H1 (cell line): ENCODE measurements at regions of chr22 and their contacts with region 1.

Region 1: GRCh38 chr22:22201185-22201929 is 43.2 kb upstream of the VPREB1 start:
- DNase-seq: peak; percentile 19 to 87
- H3K4me3 ChIP-seq: no peak overlapping the region
- H3K27ac ChIP-seq: no peak overlapping the region
- H3K4me1 ChIP-seq: no peaks in the 10 kb centered on the region
- H3K27me3 ChIP-seq: peaks cover 88 to 99% (median 97%) of the 10 kb centered on the region in 4 experiments
- CTCF ChIP-seq: peak; percentile 67 to 86 (median 72)
- EP300 ChIP-seq: no peak
- POLR2A ChIP-seq: no peak
- RAD21 ChIP-seq: peak; percentile 30 to 40; a peak in 2 of 4 replicates

Region 2: GRCh38 chr22:22156716-22157347 is 44.5 kb before region 1 on chr22:
- CTCF ChIA-PET with region 1: interaction called, 19 read pairs
- POLR2A ChIA-PET with region 1: no interaction called
- DNase-seq: peak; percentile 21 to 69
- H3K4me3 ChIP-seq: no peak overlapping the region
- H3K27ac ChIP-seq: no peak overlapping the region
- H3K4me1 ChIP-seq: no peaks in the 10 kb centered on the region
- H3K27me3 ChIP-seq: peaks cover 60 to 79% (median 73%) of the 10 kb centered on the region in 4 experiments
- CTCF ChIP-seq: peak; percentile 46 to 71 (median 70)
- EP300 ChIP-seq: no peak
- POLR2A ChIP-seq: no peak
- RAD21 ChIP-seq: peak; percentile 69 to 71

Region 3: GRCh38 chr22:22161924-22162851 is 39.2 kb before region 1 on chr22:
- CTCF ChIA-PET with region 1: interaction called, 19 read pairs
- POLR2A ChIA-PET with region 1: no interaction called
- DNase-seq: no peak
- H3K4me3 ChIP-seq: no peak overlapping the region
- H3K27ac ChIP-seq: no peak overlapping the region
- H3K4me1 ChIP-seq: no peaks in the 10 kb centered on the region
- H3K27me3 ChIP-seq: peaks cover 76 to 85% (median 82%) of the 10 kb centered on the region in 4 experiments
- CTCF ChIP-seq: no peak
- EP300 ChIP-seq: no peak
- POLR2A ChIP-seq: no peak
- RAD21 ChIP-seq: no peak

Region 4: DNA sequence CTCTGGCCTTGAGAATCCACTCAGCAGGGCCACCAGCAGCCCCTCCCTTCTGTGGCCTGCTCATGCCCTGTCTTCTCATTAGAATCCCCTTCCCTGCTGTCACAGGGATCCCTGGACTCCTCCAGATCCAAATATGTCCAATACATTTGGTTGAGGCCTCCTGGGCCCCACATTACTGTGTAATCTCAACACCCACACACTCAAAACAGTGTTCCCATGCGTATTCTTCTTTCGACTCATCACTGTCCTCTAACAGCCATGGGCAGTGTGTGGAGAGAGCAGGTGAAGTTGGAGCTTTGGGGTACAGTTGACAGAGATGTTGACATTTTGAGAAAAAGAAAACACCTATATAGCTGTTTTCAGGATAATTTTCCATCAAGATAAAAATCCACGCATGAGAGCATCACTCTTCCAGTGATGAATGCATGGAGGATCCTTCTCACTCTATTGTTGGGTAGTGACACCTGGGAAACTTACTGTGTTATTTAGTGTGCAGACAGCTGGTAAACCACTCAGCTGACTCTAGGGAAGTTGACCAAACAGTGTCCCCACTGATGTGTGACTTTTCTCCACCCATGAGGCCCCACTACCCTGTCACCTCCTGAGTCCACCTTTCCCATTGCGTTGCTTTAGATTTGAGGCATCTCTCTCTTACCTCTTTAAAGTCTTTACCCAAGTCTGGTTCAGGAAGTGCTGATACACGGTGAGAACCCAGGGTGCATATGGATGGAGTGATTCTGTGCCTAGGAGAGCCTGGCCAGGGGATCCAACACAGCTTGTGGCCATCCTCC is 14.5 kb after region 1 on chr22:
- CTCF ChIA-PET with region 1: interaction called, 49 read pairs
- POLR2A ChIA-PET with region 1: no interaction called
- DNase-seq: no peak
- H3K4me3 ChIP-seq: no peak overlapping the region
- H3K27ac ChIP-seq: no peak overlapping the region
- H3K4me1 ChIP-seq: no peaks in the 10 kb centered on the region
- H3K27me3 ChIP-seq: peaks cover 79 to 96% (median 89%) of the 10 kb centered on the region in 4 experiments
- CTCF ChIP-seq: no peak
- EP300 ChIP-seq: no peak
- POLR2A ChIP-seq: no peak
- RAD21 ChIP-seq: no peak